Activated T-helper 1 cell treated with anti-CD3 and anti-CD28 coated beads, Interleukin-12 subunit alpha, Interleukin-12 subunit beta, Interleukin-2, Interleukin-4 antibody, amounts not matched to agents 30 ng/mL and 10 ng/mL and 1 ng/mL, durations not matched to agents 14 hours and 24 hours and 36 hours (primary cell): ENCODE measurements at regions of chr5 and their contacts with region 1.

Region 1: DNA sequence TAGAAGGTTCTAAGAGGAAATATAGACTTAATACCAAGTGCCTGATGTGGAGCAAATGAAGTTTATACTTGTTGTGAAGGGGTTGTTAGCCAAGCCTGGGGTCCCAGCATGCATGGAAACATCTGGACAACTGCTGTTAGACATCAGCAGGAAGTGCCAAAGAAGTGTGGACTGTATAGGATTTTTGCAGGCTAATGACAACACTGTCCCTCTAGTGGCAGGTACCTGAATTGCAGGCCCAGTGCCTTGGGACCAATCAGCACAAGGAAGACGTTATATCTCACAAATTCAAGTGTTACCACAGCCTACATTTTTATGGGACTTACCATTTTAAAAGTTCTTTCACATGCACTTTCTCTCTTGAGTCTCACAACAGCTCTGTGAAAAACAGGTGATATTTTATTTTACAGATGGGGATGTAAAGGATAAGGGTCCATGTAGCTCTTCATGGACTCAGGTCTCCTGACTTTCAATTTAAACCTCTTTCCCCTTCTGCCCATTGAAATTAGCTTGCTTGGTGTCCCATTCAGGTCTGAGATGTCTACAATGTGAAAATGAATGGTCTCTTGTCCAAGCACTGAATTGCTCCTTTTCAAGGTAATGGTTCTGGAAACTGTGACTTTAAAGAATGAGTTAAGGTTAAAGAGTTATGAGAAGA is 89.0 kb upstream of the MAP1B start:
- DNase-seq: peak; percentile 12
- H3K4me3 Mint-ChIP-seq: no peak overlapping the region
- H3K27ac Mint-ChIP-seq: no peak overlapping the region
- H3K4me1 Mint-ChIP-seq: no peaks in the 10 kb centered on the region
- H3K27me3 Mint-ChIP-seq: peaks cover 6% of the 10 kb centered on the region

Region 2: DNA sequence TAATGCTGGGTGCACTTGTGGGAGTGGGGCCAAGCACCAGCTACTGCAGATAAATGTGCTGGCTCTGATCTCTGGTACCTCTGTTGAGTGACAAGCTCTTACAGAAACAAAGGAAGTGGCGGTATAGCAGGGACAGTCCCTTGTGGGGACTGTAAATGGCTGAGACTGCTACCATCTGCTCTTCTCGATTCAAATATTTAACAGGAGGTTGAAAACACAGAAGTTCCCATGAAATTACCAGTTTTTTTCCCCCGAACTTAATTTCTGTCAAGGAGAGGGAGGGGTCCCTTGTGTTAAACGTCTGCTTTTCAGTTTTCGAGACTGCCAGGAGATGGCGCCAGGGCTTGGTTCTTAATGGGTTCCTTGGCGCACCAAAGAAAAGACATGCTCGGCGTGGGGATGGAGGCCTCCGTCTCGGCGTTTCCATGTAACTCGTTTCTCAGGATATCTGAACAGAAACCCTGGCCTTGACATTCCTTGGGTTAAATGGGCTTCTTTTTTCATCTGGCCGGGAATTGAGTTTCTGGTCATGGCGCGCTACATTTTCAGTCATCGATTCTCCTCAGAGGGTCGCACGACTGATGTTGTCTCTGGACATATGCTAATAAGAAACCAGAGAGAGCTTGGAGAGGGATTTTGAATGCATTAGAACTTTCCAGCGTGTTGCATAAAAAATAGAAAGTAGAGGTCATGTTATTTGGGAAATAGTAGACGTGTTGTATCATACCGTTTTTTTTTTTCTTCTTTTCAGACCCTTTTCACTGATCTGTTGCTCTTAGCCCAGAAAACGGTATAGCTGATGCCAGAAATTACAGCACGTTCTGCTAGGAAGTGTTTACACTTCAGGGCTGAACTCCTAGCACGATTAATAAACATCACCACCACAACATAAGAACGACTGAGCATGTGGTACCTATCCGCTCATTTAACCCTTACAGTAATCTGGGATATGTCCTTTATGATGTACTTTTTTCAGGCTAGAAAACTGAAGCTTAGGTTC is 235.2 kb before region 1 on chr5:
- intact Hi-C with region 1: loop called (anchors 1 kb)
- DNase-seq: peak; percentile 3
- H3K4me3 Mint-ChIP-seq: peak overlapping the region; percentile 50
- H3K27ac Mint-ChIP-seq: peak overlapping the region; percentile 3
- H3K4me1 Mint-ChIP-seq: peaks cover 25% of the 10 kb centered on the region
- H3K27me3 Mint-ChIP-seq: peaks cover 9% of the 10 kb centered on the region

Region 3: GRCh38 chr5:71996789-71997188 is 21.5 kb before region 1 on chr5:
- intact Hi-C with region 1: no loop called
- DNase-seq: no peak
- H3K4me3 Mint-ChIP-seq: no peak overlapping the region
- H3K27ac Mint-ChIP-seq: no peak overlapping the region
- H3K4me1 Mint-ChIP-seq: no peaks in the 10 kb centered on the region
- H3K27me3 Mint-ChIP-seq: peaks cover 5% of the 10 kb centered on the region